Activated CD4-positive, alpha-beta memory T cell treated with anti-CD3 and anti-CD28 coated beads for 36 hours (primary cell): ENCODE measurements at regions of chr9 and their contacts with region 1.

Region 1: GRCh38 chr9:68802525-68803015 is 97.5 kb downstream of the PIP5K1B start:
- DNase-seq: peak; percentile 71
- H3K4me3 Mint-ChIP-seq: no peak overlapping the region
- H3K27ac Mint-ChIP-seq: no peak overlapping the region
- H3K4me1 Mint-ChIP-seq: no peaks in the 10 kb centered on the region
- H3K27me3 Mint-ChIP-seq: peaks cover 2% of the 10 kb centered on the region

Region 2: GRCh38 chr9:68619636-68620035 is 182.9 kb before region 1 on chr9:
- CTCF ChIA-PET with region 1: interaction called, 10 read pairs
- POLR2A ChIA-PET with region 1: no interaction called
- intact Hi-C with region 1: no loop called
- DNase-seq: no peak
- H3K4me3 Mint-ChIP-seq: no peak overlapping the region
- H3K27ac Mint-ChIP-seq: no peak overlapping the region
- H3K4me1 Mint-ChIP-seq: no peaks in the 10 kb centered on the region
- H3K27me3 Mint-ChIP-seq: peaks cover 8% of the 10 kb centered on the region

Region 3: GRCh38 chr9:68779558-68780384 is 22.8 kb before region 1 on chr9:
- CTCF ChIA-PET with region 1: no interaction called
- POLR2A ChIA-PET with region 1: interaction called, 3 read pairs
- intact Hi-C with region 1: loop called (anchors 1 kb)
- DNase-seq: peak; percentile 95
- H3K4me3 Mint-ChIP-seq: no peak overlapping the region
- H3K27ac Mint-ChIP-seq: no peak overlapping the region
- H3K4me1 Mint-ChIP-seq: peaks cover 5% of the 10 kb centered on the region
- H3K27me3 Mint-ChIP-seq: no peaks in the 10 kb centered on the region